ENCODE measurements at regions of chr12 and their contacts with region 1.

Region 1: DNA sequence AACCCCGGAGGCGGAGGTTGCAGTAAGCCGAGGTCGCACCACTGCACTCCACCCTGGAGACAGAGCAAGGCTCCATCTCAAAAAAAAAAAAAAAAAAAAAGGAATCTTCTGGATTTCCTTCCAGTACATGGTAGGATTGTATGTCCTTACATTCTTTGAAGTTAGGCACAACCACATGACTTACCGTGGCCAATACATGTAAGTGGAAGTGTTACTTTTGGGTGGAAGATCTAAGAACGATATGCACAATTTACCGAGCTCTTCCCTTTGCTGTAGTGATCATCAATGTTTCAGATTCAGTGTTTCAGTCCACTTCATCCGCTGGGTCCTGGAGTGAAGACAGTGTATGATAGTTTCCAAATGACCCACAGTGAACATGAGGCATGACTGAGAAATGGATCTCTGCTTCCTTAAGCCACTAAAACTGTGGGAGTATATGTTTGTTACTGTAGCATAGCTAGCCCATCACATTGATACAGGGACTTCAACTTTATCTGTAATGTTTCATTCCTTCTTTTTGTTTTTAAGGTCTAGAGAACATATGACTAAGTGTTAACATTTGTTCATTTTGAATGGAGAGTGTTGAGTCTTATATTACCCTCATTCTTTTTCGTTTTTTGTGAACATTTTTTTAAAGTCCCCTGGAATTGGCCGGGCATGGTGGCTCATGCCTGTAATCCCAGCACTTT is 18.5 kb upstream of the NINJ2 start:
- DNase-seq: no peak
- H3K4me3 Mint-ChIP-seq: no peak overlapping the region
- H3K27ac Mint-ChIP-seq: no peak overlapping the region
- H3K4me1 Mint-ChIP-seq: peaks cover 53% of the 10 kb centered on the region
- H3K27me3 Mint-ChIP-seq: no peaks in the 10 kb centered on the region

Region 2: GRCh38 chr12:666766-667308 is 14.9 kb before region 1 on chr12:
- CTCF ChIA-PET with region 1: interaction called, 11 read pairs
- POLR2A ChIA-PET with region 1: no interaction called
- DNase-seq: no peak
- H3K4me3 Mint-ChIP-seq: no peak overlapping the region
- H3K27ac Mint-ChIP-seq: peak overlapping the region; percentile 43
- H3K4me1 Mint-ChIP-seq: peaks cover 69% of the 10 kb centered on the region
- H3K27me3 Mint-ChIP-seq: no peaks in the 10 kb centered on the region